CD4-positive, alpha-beta T cell (primary cell): ENCODE measurements at regions of chr20 and their contacts with region 1.

Region 1: DNA sequence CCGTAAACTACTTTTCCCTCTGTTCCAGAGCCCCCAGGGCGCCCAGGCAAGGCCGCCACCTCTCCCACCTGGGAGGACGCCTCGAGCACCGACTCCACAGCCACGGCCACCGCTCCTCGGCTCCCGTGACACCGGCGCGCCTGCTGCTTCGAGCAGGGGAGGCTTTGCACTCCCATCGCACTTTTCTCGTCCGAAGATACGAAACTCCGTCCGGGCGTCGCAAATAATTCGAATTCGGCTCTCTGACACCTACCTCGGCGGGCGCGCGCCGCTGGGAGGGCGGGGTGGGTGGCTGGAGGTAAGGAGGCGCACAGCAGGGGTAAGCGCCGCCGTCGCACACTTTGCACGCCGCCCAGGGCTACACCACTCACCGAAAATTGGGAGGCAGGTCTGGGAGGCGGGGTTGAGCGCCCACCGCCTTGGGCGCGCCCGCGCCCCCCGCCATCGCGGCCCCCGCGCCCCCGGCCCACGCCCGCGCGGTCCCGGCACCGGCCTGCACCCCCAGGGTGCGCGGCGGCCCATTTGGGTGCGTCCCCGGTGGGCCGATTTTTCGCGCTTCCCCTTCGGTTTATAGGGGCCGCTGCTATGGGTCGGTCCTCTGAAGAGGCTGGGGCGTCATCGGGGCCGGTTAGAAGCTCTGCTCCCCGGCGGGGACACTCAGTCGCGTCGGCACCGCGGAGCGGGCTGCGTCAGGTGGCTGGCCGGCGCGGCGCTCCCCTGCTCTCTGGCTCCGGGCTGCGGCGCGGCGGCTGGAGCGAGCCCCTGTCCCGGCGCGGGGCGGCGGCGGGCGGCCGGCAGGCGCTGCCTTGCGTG is 36.2 kb downstream of the GNAS start:
- DNase-seq: peak; percentile 69 to 93 (median 82)
- ATAC-seq: peak; percentile 49
- H3K4me3 ChIP-seq: peak overlapping the region; percentile 83
- H3K4me3 Mint-ChIP-seq: peak overlapping the region; percentile 89
- H3K27ac ChIP-seq: peak overlapping the region; percentile 65 to 72
- H3K27ac Mint-ChIP-seq: peak overlapping the region; percentile 95
- H3K4me1 ChIP-seq: peaks cover 11% of the 10 kb centered on the region
- H3K4me1 Mint-ChIP-seq: peaks cover 52% of the 10 kb centered on the region
- H3K27me3 ChIP-seq: no peaks in the 10 kb centered on the region
- H3K27me3 Mint-ChIP-seq: no peaks in the 10 kb centered on the region
- CTCF ChIP-seq: no peak

Region 2: GRCh38 chr20:58877976-58878360 is 10.8 kb before region 1 on chr20:
- CTCF ChIA-PET with region 1: no interaction called
- POLR2A ChIA-PET with region 1: interaction called, 6 read pairs
- intact Hi-C with region 1: loop called in 1 of 2 experiments (anchors 2 kb)
- DNase-seq: peak in 6 of 14 experiments; percentile 27 to 57 (median 48)
- ATAC-seq: peak; percentile 99
- H3K4me3 ChIP-seq: no peak overlapping the region
- H3K4me3 Mint-ChIP-seq: peak overlapping the region; percentile 66
- H3K27ac ChIP-seq: no peak overlapping the region
- H3K27ac Mint-ChIP-seq: peak overlapping the region; percentile 92
- H3K4me1 ChIP-seq: peaks cover 18% of the 10 kb centered on the region
- H3K4me1 Mint-ChIP-seq: peaks cover 34% of the 10 kb centered on the region
- H3K27me3 ChIP-seq: no peaks in the 10 kb centered on the region
- H3K27me3 Mint-ChIP-seq: no peaks in the 10 kb centered on the region
- CTCF ChIP-seq: no peak

Region 3: GRCh38 chr20:58907399-58908137 is 18.8 kb after region 1 on chr20:
- CTCF ChIA-PET with region 1: no interaction called
- POLR2A ChIA-PET with region 1: interaction called, 5 read pairs
- intact Hi-C with region 1: loop called in 1 of 2 experiments (anchors 2 kb)
- DNase-seq: peak in 11 of 14 experiments; percentile 12 to 87 (median 39)
- ATAC-seq: peak; percentile 45
- H3K4me3 ChIP-seq: no peak overlapping the region
- H3K4me3 Mint-ChIP-seq: peak overlapping the region; percentile 75
- H3K27ac ChIP-seq: peak overlapping the region; percentile 49 to 58
- H3K27ac Mint-ChIP-seq: peak overlapping the region; percentile 70
- H3K4me1 ChIP-seq: peaks cover 26% of the 10 kb centered on the region
- H3K4me1 Mint-ChIP-seq: peaks cover 78% of the 10 kb centered on the region
- H3K27me3 ChIP-seq: no peaks in the 10 kb centered on the region
- H3K27me3 Mint-ChIP-seq: no peaks in the 10 kb centered on the region
- CTCF ChIP-seq: no peak

Region 4: GRCh38 chr20:58980700-58981627 is 92.2 kb after region 1 on chr20 and contains the start of gene NELFCD:
- CTCF ChIA-PET with region 1: no interaction called
- POLR2A ChIA-PET with region 1: interaction called, 14 read pairs
- intact Hi-C with region 1: loop called (anchors 2 to 5 kb)
- DNase-seq: peak; percentile 79 to 95 (median 88)
- ATAC-seq: peak; percentile 92
- H3K4me3 ChIP-seq: peak within 1 kb of the TSS; percentile 82
- H3K4me3 Mint-ChIP-seq: peak within 1 kb of the TSS; percentile 92
- H3K27ac ChIP-seq: peak within 1 kb of the TSS; percentile 41 to 52
- H3K27ac Mint-ChIP-seq: peak within 1 kb of the TSS; percentile 87
- H3K4me1 ChIP-seq: peaks cover 42% of the 10 kb centered on the region
- H3K4me1 Mint-ChIP-seq: peaks cover 43% of the 10 kb centered on the region
- H3K27me3 ChIP-seq: no peaks in the 10 kb centered on the region
- H3K27me3 Mint-ChIP-seq: no peaks in the 10 kb centered on the region
- CTCF ChIP-seq: no peak
- total RNA-seq, gene NELFCD: 95.7 to 97.0 TPM

Region 5: GRCh38 chr20:59042796-59043660 is 154.3 kb after region 1 on chr20:
- CTCF ChIA-PET with region 1: no interaction called
- POLR2A ChIA-PET with region 1: interaction called, 6 read pairs
- intact Hi-C with region 1: loop called in 1 of 2 experiments (anchors 5 kb)
- DNase-seq: peak; percentile 87 to 97 (median 94)
- ATAC-seq: peak; percentile 94
- H3K4me3 ChIP-seq: peak overlapping the region; percentile 85
- H3K4me3 Mint-ChIP-seq: peak overlapping the region; percentile 92
- H3K27ac ChIP-seq: peak overlapping the region; percentile 67 to 77
- H3K27ac Mint-ChIP-seq: peak overlapping the region; percentile 91
- H3K4me1 ChIP-seq: peaks cover 41% of the 10 kb centered on the region
- H3K4me1 Mint-ChIP-seq: peaks cover 48% of the 10 kb centered on the region
- H3K27me3 ChIP-seq: no peaks in the 10 kb centered on the region
- H3K27me3 Mint-ChIP-seq: no peaks in the 10 kb centered on the region
- CTCF ChIP-seq: no peak

Region 6: DNA sequence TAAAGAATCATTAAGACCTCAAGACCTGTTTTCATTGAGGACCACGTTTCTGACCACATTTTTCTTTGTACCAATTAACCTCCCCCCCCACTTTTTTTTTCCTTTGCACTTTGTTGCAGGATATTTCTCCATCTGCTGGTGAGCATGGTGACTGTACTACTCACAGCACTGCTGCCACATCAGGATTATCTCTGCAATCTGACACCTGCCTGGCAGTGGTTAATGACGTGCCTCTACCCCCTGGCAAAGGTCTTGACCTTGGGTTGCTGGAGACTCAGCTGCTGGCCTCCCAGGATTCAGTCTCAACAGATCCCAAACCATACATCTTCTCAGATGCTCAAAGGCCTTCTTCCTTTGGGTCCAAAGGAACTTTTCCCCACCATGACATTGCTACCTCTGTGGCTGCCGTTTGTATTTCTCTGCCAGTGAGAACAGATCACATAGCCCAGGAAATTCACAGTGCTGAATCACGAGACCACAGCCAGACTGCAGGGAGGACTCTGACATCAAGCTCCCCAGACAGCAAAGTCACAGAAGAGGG is 365.1 kb after region 1 on chr20:
- CTCF ChIA-PET with region 1: no interaction called
- POLR2A ChIA-PET with region 1: interaction called, 11 read pairs
- intact Hi-C with region 1: no loop called
- DNase-seq: peak in 12 of 14 experiments; percentile 11 to 64 (median 30)
- ATAC-seq: peak; percentile 63
- H3K4me3 ChIP-seq: no peak overlapping the region
- H3K4me3 Mint-ChIP-seq: peak overlapping the region; percentile 78
- H3K27ac ChIP-seq: peak overlapping the region; percentile 46 to 51
- H3K27ac Mint-ChIP-seq: peak overlapping the region; percentile 94
- H3K4me1 ChIP-seq: peaks cover 28% of the 10 kb centered on the region
- H3K4me1 Mint-ChIP-seq: peaks cover 82% of the 10 kb centered on the region
- H3K27me3 ChIP-seq: no peaks in the 10 kb centered on the region
- H3K27me3 Mint-ChIP-seq: no peaks in the 10 kb centered on the region
- CTCF ChIP-seq: no peak